Activated CD4-positive, alpha-beta T cell treated with anti-CD3 and anti-CD28 coated beads for 36 hours (primary cell): ENCODE measurements at regions of chr6 and their contacts with region 1.

Region 1: DNA sequence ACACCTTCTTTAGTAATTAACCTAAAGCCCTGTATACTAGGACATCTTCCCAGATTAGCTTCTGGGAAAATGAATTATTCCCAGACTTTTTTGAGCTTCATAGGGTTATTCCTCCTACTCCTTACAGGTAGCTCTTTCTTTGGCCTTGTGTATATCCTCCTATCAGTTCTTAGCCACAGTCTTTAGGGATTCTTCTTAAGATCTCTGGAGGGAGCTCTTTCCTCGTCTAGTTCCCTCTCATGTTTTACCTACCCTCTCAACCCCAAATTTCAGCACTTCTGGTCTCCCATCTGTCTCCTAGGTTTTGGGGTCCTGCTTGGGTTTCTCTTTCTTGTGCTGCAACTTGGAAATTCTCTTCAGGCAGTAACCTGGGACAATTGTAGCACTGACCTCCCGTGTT is 46.4 kb upstream of the SLC35B3 start:
- DNase-seq: no peak
- ATAC-seq: no peak
- H3K4me3 Mint-ChIP-seq: no peak overlapping the region
- H3K27ac Mint-ChIP-seq: no peak overlapping the region
- H3K4me1 Mint-ChIP-seq: no peaks in the 10 kb centered on the region
- H3K27me3 Mint-ChIP-seq: peaks cover 7% of the 10 kb centered on the region

Region 2: GRCh38 chr6:8888468-8888867 is 406.8 kb after region 1 on chr6:
- CTCF ChIA-PET with region 1: no interaction called
- POLR2A ChIA-PET with region 1: no interaction called
- intact Hi-C with region 1: loop called in 1 of 2 experiments (anchors 10 kb)
- DNase-seq: no peak
- ATAC-seq: no peak
- H3K4me3 Mint-ChIP-seq: no peak overlapping the region
- H3K27ac Mint-ChIP-seq: no peak overlapping the region
- H3K4me1 Mint-ChIP-seq: no peaks in the 10 kb centered on the region
- H3K27me3 Mint-ChIP-seq: peaks cover 2% of the 10 kb centered on the region

Region 3: DNA sequence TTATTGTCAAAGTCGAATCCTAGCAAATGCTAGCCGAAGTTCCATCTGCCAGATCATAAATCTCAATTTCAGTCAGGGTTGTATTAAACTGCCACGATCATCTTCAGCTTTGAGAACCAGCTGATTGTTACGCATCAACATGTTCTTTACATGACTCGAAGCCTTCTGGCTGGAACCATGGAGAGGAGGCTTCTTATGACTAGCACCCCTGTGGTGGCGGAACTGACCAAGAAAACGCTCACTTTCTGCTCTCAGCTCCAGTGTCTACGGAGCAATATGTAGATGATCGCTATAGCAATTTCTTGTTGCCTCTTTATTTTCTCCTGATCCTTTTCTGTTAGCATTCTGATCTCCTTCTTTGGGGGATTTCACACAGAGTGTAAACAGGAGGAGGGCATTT is 433.0 kb after region 1 on chr6:
- CTCF ChIA-PET with region 1: no interaction called
- POLR2A ChIA-PET with region 1: no interaction called
- intact Hi-C with region 1: loop called in 1 of 2 experiments (anchors 10 kb)
- DNase-seq: no peak
- ATAC-seq: no peak
- H3K4me3 Mint-ChIP-seq: no peak overlapping the region
- H3K27ac Mint-ChIP-seq: no peak overlapping the region
- H3K4me1 Mint-ChIP-seq: no peaks in the 10 kb centered on the region
- H3K27me3 Mint-ChIP-seq: peaks cover 6% of the 10 kb centered on the region